ENCODE measurements at regions of chr18 and their contacts with region 1.

Region 1: GRCh38 chr18:58572181-58572580 is 56.7 kb downstream of the ALPK2 start:
- DNase-seq: no peak
- H3K4me3 ChIP-seq: no peak overlapping the region
- H3K27ac ChIP-seq: no peak overlapping the region
- H3K4me1 ChIP-seq: no peaks in the 10 kb centered on the region
- H3K27me3 ChIP-seq: no peaks in the 10 kb centered on the region
- CTCF ChIP-seq: no peak
- POLR2A ChIP-seq: no peak

Region 2: DNA sequence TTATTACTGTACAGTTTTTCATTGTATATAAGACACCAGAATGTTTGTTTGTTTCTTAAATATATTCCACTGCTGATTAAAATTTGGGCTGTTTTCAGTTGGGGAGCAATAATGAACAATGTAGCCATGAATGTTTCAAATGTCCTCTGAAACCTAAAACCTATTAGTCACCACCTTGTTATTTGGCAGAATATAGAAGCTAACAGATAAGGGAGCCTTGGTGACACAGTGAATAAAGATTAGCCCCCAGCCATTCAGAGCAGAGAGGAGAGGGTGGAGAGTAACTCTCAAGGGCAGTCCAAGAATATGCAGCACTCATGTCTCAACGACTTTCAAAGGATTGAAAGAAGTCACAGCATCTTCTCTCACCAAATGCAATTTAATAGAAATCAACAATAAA is 725.9 kb before region 1 on chr18:
- intact Hi-C with region 1: no loop called
- DNase-seq: no peak
- H3K4me3 ChIP-seq: no peak overlapping the region
- H3K27ac ChIP-seq: no peak overlapping the region
- H3K4me1 ChIP-seq: no peaks in the 10 kb centered on the region
- H3K27me3 ChIP-seq: no peaks in the 10 kb centered on the region
- CTCF ChIP-seq: no peak
- POLR2A ChIP-seq: no peak

Region 3: GRCh38 chr18:58584200-58585127 is 12.3 kb after region 1 on chr18:
- intact Hi-C with region 1: loop called (anchors 1 kb)
- DNase-seq: no peak
- H3K4me3 ChIP-seq: no peak overlapping the region
- H3K27ac ChIP-seq: no peak overlapping the region
- H3K4me1 ChIP-seq: no peaks in the 10 kb centered on the region
- H3K27me3 ChIP-seq: no peaks in the 10 kb centered on the region
- CTCF ChIP-seq: no peak
- POLR2A ChIP-seq: no peak

Region 4: DNA sequence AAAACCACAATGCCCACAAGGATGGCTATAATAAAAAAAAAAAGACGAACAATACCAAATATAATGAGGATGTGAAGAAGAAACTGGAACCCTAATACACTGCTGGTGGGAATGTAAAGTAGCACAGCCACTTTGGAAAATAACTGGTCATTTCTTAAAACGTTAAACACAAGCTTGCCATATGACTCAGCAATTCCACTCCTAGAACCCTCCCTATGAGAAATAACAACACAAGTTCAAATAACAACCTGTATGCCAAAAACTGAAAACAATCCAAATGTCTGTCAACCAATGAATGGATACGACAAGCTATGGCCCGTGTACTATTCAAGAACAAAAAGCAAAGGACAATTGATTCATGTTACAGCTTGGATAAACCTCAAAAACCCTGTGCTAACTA is 63.7 kb after region 1 on chr18:
- intact Hi-C with region 1: no loop called
- DNase-seq: no peak
- H3K4me3 ChIP-seq: no peak overlapping the region
- H3K27ac ChIP-seq: no peak overlapping the region
- H3K4me1 ChIP-seq: no peaks in the 10 kb centered on the region
- H3K27me3 ChIP-seq: no peaks in the 10 kb centered on the region
- CTCF ChIP-seq: no peak
- POLR2A ChIP-seq: no peak

Region 5: GRCh38 chr18:58806826-58807714 is 234.9 kb after region 1 on chr18:
- intact Hi-C with region 1: loop called (anchors 5 kb)
- DNase-seq: no peak
- H3K4me3 ChIP-seq: no peak overlapping the region
- H3K27ac ChIP-seq: no peak overlapping the region
- H3K4me1 ChIP-seq: no peaks in the 10 kb centered on the region
- H3K27me3 ChIP-seq: no peaks in the 10 kb centered on the region
- CTCF ChIP-seq: no peak
- POLR2A ChIP-seq: no peak

Region 6: GRCh38 chr18:59298871-59299270 is 726.7 kb after region 1 on chr18:
- intact Hi-C with region 1: no loop called
- DNase-seq: no peak
- H3K4me3 ChIP-seq: no peak overlapping the region
- H3K27ac ChIP-seq: no peak overlapping the region
- H3K4me1 ChIP-seq: no peaks in the 10 kb centered on the region
- H3K27me3 ChIP-seq: peaks cover 0 to 6% of the 10 kb centered on the region in 2 donors
- CTCF ChIP-seq: no peak
- POLR2A ChIP-seq: no peak